ENCODE measurements at regions of chr6 and their contacts with region 1.

Region 1: GRCh38 chr6:137261393-137262160 is 42.4 kb upstream of the IFNGR1 start:
- DNase-seq: no peak
- H3K4me3 ChIP-seq: no peak overlapping the region
- H3K27ac ChIP-seq: no peak overlapping the region
- H3K4me1 ChIP-seq: peaks cover 0 to 6% of the 10 kb centered on the region in 2 donors
- H3K27me3 ChIP-seq: no peaks in the 10 kb centered on the region
- CTCF ChIP-seq: no peak
- POLR2A ChIP-seq: no peak

Region 2: DNA sequence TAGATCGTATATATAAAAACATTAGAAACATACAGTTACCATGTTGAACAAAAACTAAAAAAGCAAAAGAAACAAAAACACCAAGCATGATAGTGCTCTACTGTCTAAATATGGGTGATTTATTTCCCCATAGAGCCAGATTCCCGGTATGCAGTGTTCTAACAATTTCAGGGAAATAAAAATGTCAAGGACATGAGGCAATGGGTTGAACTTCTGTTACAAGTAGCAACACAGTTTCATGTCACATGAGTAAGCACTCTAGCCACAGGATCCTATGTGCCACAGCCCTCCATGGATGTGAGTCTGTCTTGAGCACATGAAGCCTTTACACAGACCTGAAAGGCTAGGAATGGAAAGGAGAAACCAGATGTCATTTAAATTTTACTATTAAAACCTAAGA is 565.3 kb before region 1 on chr6:
- intact Hi-C with region 1: no loop called
- DNase-seq: peak; percentile 42 to 84 (median 79)
- H3K4me3 ChIP-seq: no peak overlapping the region
- H3K27ac ChIP-seq: peak overlapping the region; percentile 3 to 82 (median 70)
- H3K4me1 ChIP-seq: peaks cover 23 to 97% of the 10 kb centered on the region in 2 donors
- H3K27me3 ChIP-seq: no peaks in the 10 kb centered on the region
- CTCF ChIP-seq: no peak
- POLR2A ChIP-seq: peak in 1 of 2 donors; percentile 29

Region 3: DNA sequence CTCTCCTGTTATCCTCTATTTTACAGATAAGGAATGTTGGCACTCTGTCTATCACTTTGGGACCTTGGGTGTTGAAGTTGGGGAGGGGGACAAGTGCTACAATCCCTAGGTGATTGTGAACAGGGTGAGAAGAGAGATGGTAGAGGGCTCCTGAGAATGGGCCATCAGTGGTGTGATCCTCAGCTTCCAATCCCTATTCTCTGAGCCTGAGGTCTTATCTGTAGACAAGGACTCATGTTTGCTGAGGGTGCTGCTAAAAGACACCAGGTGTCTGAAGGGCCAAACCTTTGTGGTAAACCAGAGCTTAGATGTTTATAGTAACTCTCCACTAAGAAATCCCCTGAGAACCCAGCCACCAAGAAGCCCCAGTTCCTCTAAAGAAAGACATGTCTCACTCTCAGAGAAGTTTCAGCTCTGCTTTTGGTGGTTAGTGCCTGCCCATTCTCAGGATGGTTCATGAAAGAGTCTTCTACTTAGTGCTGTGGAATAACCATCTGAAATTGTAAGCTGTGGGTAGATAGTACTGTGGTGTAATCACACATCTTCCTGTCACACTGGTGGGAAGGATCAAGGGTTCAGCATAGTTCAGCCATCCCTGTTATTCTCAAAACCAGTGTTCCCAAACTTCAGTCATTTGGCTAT is 158.6 kb before region 1 on chr6:
- intact Hi-C with region 1: loop called in 1 of 2 experiments (anchors 10 kb)
- DNase-seq: no peak
- H3K4me3 ChIP-seq: no peak overlapping the region
- H3K27ac ChIP-seq: no peak overlapping the region
- H3K4me1 ChIP-seq: no peaks in the 10 kb centered on the region
- H3K27me3 ChIP-seq: no peaks in the 10 kb centered on the region
- CTCF ChIP-seq: no peak
- POLR2A ChIP-seq: no peak

Region 4: GRCh38 chr6:137240168-137240567 is 21.4 kb before region 1 on chr6:
- intact Hi-C with region 1: no loop called
- DNase-seq: peak in 5 of 7 donors; percentile 44 to 75 (median 65)
- H3K4me3 ChIP-seq: no peak overlapping the region
- H3K27ac ChIP-seq: peak overlapping the region in 2 of 5 donors; percentile 66 to 71
- H3K4me1 ChIP-seq: peaks cover 14 to 20% of the 10 kb centered on the region in 2 donors
- H3K27me3 ChIP-seq: no peaks in the 10 kb centered on the region
- CTCF ChIP-seq: no peak
- POLR2A ChIP-seq: no peak

Region 5: DNA sequence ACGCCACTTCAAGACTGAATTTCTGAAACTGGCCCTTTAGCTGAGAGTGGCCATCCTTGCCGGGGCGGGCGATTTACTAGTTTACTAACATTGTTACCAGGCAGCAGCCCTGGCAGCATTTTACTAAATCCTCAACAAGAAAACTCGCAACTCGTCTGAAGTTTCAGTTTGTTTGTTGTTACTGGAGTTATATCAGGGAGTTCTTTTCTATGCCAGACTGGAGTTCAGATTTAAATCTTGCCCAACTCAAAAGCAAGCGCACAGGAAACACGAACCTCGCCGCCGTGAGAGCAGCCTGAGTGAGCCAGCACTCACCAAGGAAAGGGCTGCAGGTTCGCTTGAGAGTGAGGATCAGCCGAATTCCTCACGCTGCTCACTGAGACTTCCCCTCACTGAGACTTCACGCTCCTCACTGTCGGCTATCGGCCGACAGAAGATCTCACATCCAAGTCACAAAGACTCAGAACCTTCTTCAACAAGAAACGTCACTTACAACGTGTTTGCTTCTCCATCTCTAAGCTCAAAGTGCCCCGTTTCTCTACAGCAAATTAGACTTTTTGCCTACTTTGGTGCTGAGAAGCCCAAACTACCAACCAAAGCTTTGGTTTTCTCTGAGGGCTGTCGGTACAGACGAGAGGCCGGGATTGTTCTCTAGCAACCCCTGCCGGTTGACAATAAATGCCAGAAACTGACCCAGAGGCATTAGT is 153.7 kb after region 1 on chr6:
- intact Hi-C with region 1: no loop called
- DNase-seq: peak; percentile 49 to 77 (median 59)
- H3K4me3 ChIP-seq: peak overlapping the region in 2 of 4 donors; percentile 14 to 47
- H3K27ac ChIP-seq: no peak overlapping the region
- H3K4me1 ChIP-seq: peaks cover 0 to 6% of the 10 kb centered on the region in 2 donors
- H3K27me3 ChIP-seq: peaks cover 7% of the 10 kb centered on the region
- CTCF ChIP-seq: peak; percentile 48 to 66 (median 60)
- POLR2A ChIP-seq: no peak